A549 (cell line): ENCODE measurements at regions of chr12 and their contacts with region 1.

Region 1: DNA sequence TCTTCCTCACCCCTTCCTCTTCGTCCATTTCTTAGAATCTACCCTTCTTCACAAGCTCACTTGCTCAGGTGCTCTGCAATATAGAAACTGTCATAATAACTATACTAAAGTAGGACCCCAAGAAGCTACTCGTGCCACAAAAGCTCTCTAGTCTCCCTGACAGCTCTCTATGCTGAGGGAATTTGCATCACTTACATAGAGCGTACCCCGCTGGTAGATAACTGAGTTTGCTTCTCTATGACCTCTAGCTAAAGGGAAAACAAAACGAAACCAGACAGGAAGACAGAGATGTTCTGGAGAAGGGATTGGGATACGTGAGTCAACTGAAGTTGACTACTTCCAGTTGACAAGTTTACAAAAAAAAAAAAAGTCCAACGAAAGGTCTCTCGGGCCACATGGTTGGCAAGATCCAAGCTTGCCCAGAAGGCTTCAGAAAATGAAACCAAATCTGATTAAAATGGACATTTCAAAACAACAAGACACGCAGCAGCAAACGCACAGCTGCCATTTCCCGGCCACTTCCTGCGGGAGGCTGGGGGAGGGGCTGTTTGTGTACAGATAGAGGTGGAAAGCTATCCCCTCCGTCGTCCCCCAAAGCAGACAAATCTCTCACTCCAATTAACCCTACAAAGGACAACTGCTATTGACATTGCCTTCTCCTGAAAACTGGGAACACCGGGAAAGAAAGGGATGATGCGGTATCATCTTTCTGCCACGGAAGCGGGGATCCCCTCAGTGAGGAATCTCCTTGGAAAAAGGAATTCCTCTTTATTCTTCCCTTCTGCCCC is 1.3 kb downstream of the BAZ2A start:
- DNase-seq: peak; percentile 35 to 51
- ATAC-seq: peak in 1 of 2 experiments; percentile 12; a peak in 2 of 6 replicates
- H3K4me3 ChIP-seq: peak overlapping the region; percentile 99
- H3K27ac ChIP-seq: peak overlapping the region; percentile 97 to 99
- H3K4me1 ChIP-seq: peaks cover 40% of the 10 kb centered on the region
- CTCF ChIP-seq: no peak
- EP300 ChIP-seq: no peak
- POLR2A ChIP-seq: no peak
- RAD21 ChIP-seq: no peak

Region 2: GRCh38 chr12:56389412-56389811 is 239.5 kb before region 1 on chr12:
- CTCF ChIA-PET with region 1: no interaction called
- POLR2A ChIA-PET with region 1: no interaction called
- DNase-seq: no peak
- ATAC-seq: no peak
- H3K4me3 ChIP-seq: no peak overlapping the region
- H3K27ac ChIP-seq: no peak overlapping the region
- H3K4me1 ChIP-seq: no peaks in the 10 kb centered on the region
- CTCF ChIP-seq: no peak
- EP300 ChIP-seq: no peak
- POLR2A ChIP-seq: no peak
- RAD21 ChIP-seq: no peak

Region 3: DNA sequence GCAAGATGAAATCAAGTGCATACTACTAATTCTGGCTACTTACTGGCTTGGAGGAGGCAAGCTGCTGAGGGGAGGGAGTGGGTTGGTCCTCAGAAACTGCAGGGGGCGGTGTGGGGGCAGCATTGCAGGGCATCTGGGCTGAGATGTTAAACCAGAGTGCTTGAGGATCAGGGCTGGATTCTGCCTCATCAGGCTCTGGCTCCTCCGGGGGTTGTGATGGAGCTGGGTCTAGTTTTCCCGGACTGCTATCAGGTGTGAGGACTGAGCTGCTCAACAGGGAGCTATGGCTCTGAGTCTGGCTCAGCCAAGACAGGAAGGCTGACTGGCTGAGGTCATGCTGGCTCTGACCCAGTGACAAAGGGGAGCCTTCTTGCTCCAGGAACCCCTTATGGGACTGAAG is 27.4 kb before region 1 on chr12:
- CTCF ChIA-PET with region 1: interaction called, 49 read pairs
- POLR2A ChIA-PET with region 1: no interaction called
- DNase-seq: peak; percentile 29 to 43
- ATAC-seq: peak; percentile 40 to 72; a peak in 4 of 6 replicates
- H3K4me3 ChIP-seq: no peak overlapping the region
- H3K27ac ChIP-seq: no peak overlapping the region
- H3K4me1 ChIP-seq: no peaks in the 10 kb centered on the region
- CTCF ChIP-seq: peak; percentile 14; the same call in 1 of the 3 replicates
- EP300 ChIP-seq: no peak
- POLR2A ChIP-seq: no peak
- RAD21 ChIP-seq: peak in 1 of 2 experiments; percentile 43; a peak in 2 of 5 replicates